CD8-positive, alpha-beta T cell (primary cell): ENCODE measurements at regions of chr4 and their contacts with region 1.

Region 1: GRCh38 chr4:121182296-121182695 is 18.2 kb upstream of the TNIP3 start:
- DNase-seq: peak in 2 of 9 experiments; percentile 60 to 77
- ATAC-seq: peak; percentile 72
- H3K4me3 ChIP-seq: peak overlapping the region; percentile 53 to 57
- H3K4me3 Mint-ChIP-seq: peak overlapping the region; percentile 88
- H3K27ac ChIP-seq: peak overlapping the region; percentile 78 to 94
- H3K27ac Mint-ChIP-seq: peak overlapping the region; percentile 97
- H3K4me1 ChIP-seq: peaks cover 54% of the 10 kb centered on the region
- H3K4me1 Mint-ChIP-seq: peaks cover 82% of the 10 kb centered on the region
- H3K27me3 ChIP-seq: no peaks in the 10 kb centered on the region
- H3K27me3 Mint-ChIP-seq: no peaks in the 10 kb centered on the region
- CTCF ChIP-seq: no peak

Region 2: GRCh38 chr4:120809518-120809917 is 372.8 kb before region 1 on chr4:
- CTCF ChIA-PET with region 1: no interaction called
- POLR2A ChIA-PET with region 1: no interaction called
- intact Hi-C with region 1: no loop called
- DNase-seq: no peak
- ATAC-seq: no peak
- H3K4me3 ChIP-seq: no peak overlapping the region
- H3K4me3 Mint-ChIP-seq: no peak overlapping the region
- H3K27ac ChIP-seq: no peak overlapping the region
- H3K27ac Mint-ChIP-seq: no peak overlapping the region
- H3K4me1 ChIP-seq: no peaks in the 10 kb centered on the region
- H3K4me1 Mint-ChIP-seq: no peaks in the 10 kb centered on the region
- H3K27me3 ChIP-seq: no peaks in the 10 kb centered on the region
- H3K27me3 Mint-ChIP-seq: no peaks in the 10 kb centered on the region
- CTCF ChIP-seq: no peak

Region 3: GRCh38 chr4:121139533-121140222 is 42.6 kb before region 1 on chr4:
- CTCF ChIA-PET with region 1: no interaction called
- POLR2A ChIA-PET with region 1: no interaction called
- intact Hi-C with region 1: loop called in 1 of 2 experiments (anchors 2 kb)
- DNase-seq: peak in 2 of 9 experiments; percentile 27 to 68
- ATAC-seq: peak; percentile 78
- H3K4me3 ChIP-seq: no peak overlapping the region
- H3K4me3 Mint-ChIP-seq: peak overlapping the region; percentile 3
- H3K27ac ChIP-seq: peak overlapping the region; percentile 65 to 72
- H3K27ac Mint-ChIP-seq: peak overlapping the region; percentile 88
- H3K4me1 ChIP-seq: peaks cover 35% of the 10 kb centered on the region
- H3K4me1 Mint-ChIP-seq: peaks cover 50% of the 10 kb centered on the region
- H3K27me3 ChIP-seq: no peaks in the 10 kb centered on the region
- H3K27me3 Mint-ChIP-seq: no peaks in the 10 kb centered on the region
- CTCF ChIP-seq: no peak

Region 4: GRCh38 chr4:121168446-121169281 is 13.6 kb before region 1 on chr4:
- CTCF ChIA-PET with region 1: interaction called, 5 read pairs
- POLR2A ChIA-PET with region 1: interaction called, 5 read pairs
- intact Hi-C with region 1: loop called in 1 of 2 experiments (anchors 1 kb)
- DNase-seq: no peak
- ATAC-seq: no peak
- H3K4me3 ChIP-seq: no peak overlapping the region
- H3K4me3 Mint-ChIP-seq: no peak overlapping the region
- H3K27ac ChIP-seq: no peak overlapping the region
- H3K27ac Mint-ChIP-seq: no peak overlapping the region
- H3K4me1 ChIP-seq: peaks cover 27% of the 10 kb centered on the region
- H3K4me1 Mint-ChIP-seq: peaks cover 60% of the 10 kb centered on the region
- H3K27me3 ChIP-seq: no peaks in the 10 kb centered on the region
- H3K27me3 Mint-ChIP-seq: no peaks in the 10 kb centered on the region
- CTCF ChIP-seq: no peak